Mucosa of descending colon (tissue), 3 donors: ENCODE measurements at regions of chr14 and their contacts with region 1.

Region 1: GRCh38 chr14:64147126-64147790 is 146.9 kb downstream of the ESR2 start:
- DNase-seq: no peak
- ATAC-seq: no peak
- H3K4me3 ChIP-seq: no peak overlapping the region
- H3K4me1 ChIP-seq: no peaks in the 10 kb centered on the region
- CTCF ChIP-seq: no peak

Region 2: GRCh38 chr14:64119500-64119899 is 27.8 kb before region 1 on chr14:
- intact Hi-C with region 1: loop called in 1 of 2 experiments (anchors 1 kb)
- DNase-seq: no peak
- ATAC-seq: no peak
- H3K4me3 ChIP-seq: no peak overlapping the region
- H3K4me1 ChIP-seq: no peaks in the 10 kb centered on the region
- CTCF ChIP-seq: no peak

Region 3: DNA sequence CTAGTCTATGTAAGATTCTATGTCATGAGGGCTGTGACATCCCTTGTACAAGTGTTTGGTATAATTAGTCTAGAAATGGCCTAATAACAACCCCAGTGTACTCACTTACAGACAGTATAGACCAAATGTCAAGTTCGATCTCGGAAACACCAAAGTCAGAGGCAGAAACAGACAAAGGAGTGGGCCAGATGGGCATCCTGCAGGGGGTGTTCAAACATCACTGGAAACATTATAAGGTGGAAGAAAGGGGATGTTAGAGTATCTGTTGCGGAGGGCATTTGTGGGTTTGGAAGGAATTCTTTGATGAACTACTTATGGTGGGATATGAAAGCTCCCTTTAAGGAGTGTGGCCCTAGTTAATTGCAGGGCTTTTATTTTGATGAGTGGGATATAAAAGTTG is 12.3 kb after region 1 on chr14:
- intact Hi-C with region 1: no loop called
- DNase-seq: no peak
- ATAC-seq: no peak
- H3K4me3 ChIP-seq: no peak overlapping the region
- H3K4me1 ChIP-seq: no peaks in the 10 kb centered on the region
- CTCF ChIP-seq: no peak

Region 4: GRCh38 chr14:64410084-64410774 is 263.0 kb after region 1 on chr14:
- intact Hi-C with region 1: no loop called
- DNase-seq: no peak
- ATAC-seq: peak; percentile 23
- H3K4me3 ChIP-seq: no peak overlapping the region
- H3K4me1 ChIP-seq: no peaks in the 10 kb centered on the region
- CTCF ChIP-seq: no peak